Dendritic cell treated with granulocyte-macrophage colony-stimulating factor and Interleukin-4, amounts not matched to agents 40 ng/mL and 50 ng/mL, for 4 days (primary cell): ENCODE measurements at regions of chr2 and their contacts with region 1.

Region 1: GRCh38 chr2:70553584-70554337 is at the start of gene TGFA:
- H3K4me3 Mint-ChIP-seq: peak within 1 kb of the TSS; percentile 99
- H3K27ac Mint-ChIP-seq: peak within 1 kb of the TSS; percentile 95
- H3K4me1 Mint-ChIP-seq: peaks cover 55% of the 10 kb centered on the region
- H3K27me3 Mint-ChIP-seq: peaks cover 20% of the 10 kb centered on the region

Region 2: DNA sequence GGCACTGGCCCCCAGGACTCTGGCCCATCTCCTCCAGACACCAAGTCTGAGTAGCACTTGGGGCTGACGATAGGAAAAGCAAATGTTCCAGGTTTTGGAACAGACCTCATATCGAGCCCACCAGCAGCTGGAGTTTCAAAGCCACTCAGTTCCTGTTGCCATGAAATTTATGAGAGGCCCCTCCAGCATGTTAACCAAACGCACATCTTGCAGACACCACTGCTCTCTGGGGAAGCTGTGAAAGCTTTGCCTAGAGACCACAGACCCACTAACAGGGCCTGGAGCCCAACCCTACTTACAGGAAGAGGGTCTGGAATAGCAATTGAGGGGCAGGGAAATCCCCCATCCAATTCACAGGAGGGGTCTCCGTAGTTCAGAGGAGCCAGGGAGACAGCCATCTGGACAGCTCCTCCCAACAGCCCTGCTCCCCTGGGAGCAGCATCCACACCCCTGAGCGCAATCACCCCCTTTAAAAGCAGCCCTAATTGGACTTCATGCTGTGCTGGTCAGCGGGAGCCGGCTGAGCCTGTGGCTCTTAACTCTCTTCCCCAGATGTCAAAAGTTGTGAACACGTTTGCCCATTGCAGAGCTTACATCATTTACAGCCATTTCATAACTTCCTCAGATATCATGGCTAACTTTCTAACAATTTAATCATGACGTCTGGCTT is 81.4 kb before region 1 on chr2:
- intact Hi-C with region 1: loop called (anchors 2 kb)
- H3K4me3 Mint-ChIP-seq: peak overlapping the region; percentile 30
- H3K27ac Mint-ChIP-seq: peak overlapping the region; percentile 91
- H3K4me1 Mint-ChIP-seq: peaks cover 86% of the 10 kb centered on the region
- H3K27me3 Mint-ChIP-seq: no peaks in the 10 kb centered on the region